ENCODE measurements at regions of chr4 and their contacts with region 1.

Region 1: DNA sequence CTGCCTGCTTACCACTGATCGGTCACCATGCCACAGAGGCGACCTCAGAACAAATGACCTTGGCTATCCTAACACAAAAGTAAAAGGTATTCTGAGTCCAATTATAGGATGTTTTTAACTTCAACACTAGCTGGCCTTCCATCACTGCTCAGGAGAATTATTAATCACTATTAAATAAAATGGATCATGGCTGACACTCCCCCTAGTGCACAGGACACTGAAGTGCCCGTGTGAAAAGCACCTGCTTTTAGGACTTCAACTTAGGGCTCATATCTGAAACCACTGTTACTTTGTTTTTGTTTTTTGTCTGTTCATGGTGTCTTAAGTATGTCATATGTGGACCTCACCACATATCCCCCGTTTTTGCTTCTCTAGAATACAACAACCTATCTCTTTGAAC is 33.9 kb downstream of the STX18 start:
- DNase-seq: no peak
- ATAC-seq: peak; percentile 50; the same call in 1 of the 2 replicates
- H3K4me3 Mint-ChIP-seq: no peak overlapping the region
- H3K27ac Mint-ChIP-seq: no peak overlapping the region
- H3K4me1 Mint-ChIP-seq: peaks cover 3% of the 10 kb centered on the region
- H3K27me3 Mint-ChIP-seq: peaks cover 3% of the 10 kb centered on the region; the same call in 1 of the 2 replicates
- CTCF ChIP-seq: no peak

Region 2: GRCh38 chr4:4480685-4481398 is 27.1 kb before region 1 on chr4:
- CTCF ChIA-PET with region 1: interaction called, 12 read pairs
- POLR2A ChIA-PET with region 1: no interaction called
- DNase-seq: no peak
- ATAC-seq: peak; percentile 21; the same call in 1 of the 2 replicates
- H3K4me3 Mint-ChIP-seq: no peak overlapping the region
- H3K27ac Mint-ChIP-seq: no peak overlapping the region; the same call in 1 of the 2 replicates
- H3K4me1 Mint-ChIP-seq: peaks cover 45% of the 10 kb centered on the region
- H3K27me3 Mint-ChIP-seq: no peaks in the 10 kb centered on the region
- CTCF ChIP-seq: no peak

Region 3: GRCh38 chr4:4519297-4519894 is 11.5 kb after region 1 on chr4:
- CTCF ChIA-PET with region 1: interaction called, 12 read pairs
- POLR2A ChIA-PET with region 1: no interaction called
- DNase-seq: no peak
- ATAC-seq: peak; percentile 50
- H3K4me3 Mint-ChIP-seq: no peak overlapping the region
- H3K27ac Mint-ChIP-seq: no peak overlapping the region
- H3K4me1 Mint-ChIP-seq: peaks cover 11% of the 10 kb centered on the region
- H3K27me3 Mint-ChIP-seq: no peaks in the 10 kb centered on the region
- CTCF ChIP-seq: peak; percentile 39; the same call in 1 of the 2 replicates

Measured in WTC11 (cell line).